ENCODE measurements at regions of chr4 and their contacts with region 1.

Region 1: GRCh38 chr4:88211473-88212252 is 53.2 kb upstream of the ABCG2 start:
- DNase-seq: peak; percentile 53
- CTCF ChIP-seq: peak; percentile 52

Region 2: GRCh38 chr4:87848622-87849351 is 362.9 kb before region 1 on chr4:
- CTCF ChIA-PET with region 1: interaction called, 115 read pairs
- POLR2A ChIA-PET with region 1: no interaction called
- DNase-seq: peak; percentile 26
- CTCF ChIP-seq: peak; percentile 66

Region 3: GRCh38 chr4:88021824-88022223 is 189.8 kb before region 1 on chr4:
- CTCF ChIA-PET with region 1: interaction called, 10 read pairs
- POLR2A ChIA-PET with region 1: no interaction called
- DNase-seq: no peak
- CTCF ChIP-seq: no peak

Region 4: GRCh38 chr4:88033309-88033708 is 178.4 kb before region 1 on chr4:
- CTCF ChIA-PET with region 1: interaction called, 102 read pairs
- POLR2A ChIA-PET with region 1: no interaction called
- DNase-seq: peak; percentile 50
- CTCF ChIP-seq: peak; percentile 70

Region 5: GRCh38 chr4:88196013-88196365 is 15.7 kb before region 1 on chr4:
- CTCF ChIA-PET with region 1: interaction called, 10 read pairs
- POLR2A ChIA-PET with region 1: no interaction called
- DNase-seq: no peak
- CTCF ChIP-seq: no peak

Region 6: GRCh38 chr4:88225232-88226105 is 13.8 kb after region 1 on chr4:
- CTCF ChIA-PET with region 1: interaction called, 10 read pairs
- POLR2A ChIA-PET with region 1: no interaction called
- DNase-seq: no peak
- CTCF ChIP-seq: no peak

Region 7: DNA sequence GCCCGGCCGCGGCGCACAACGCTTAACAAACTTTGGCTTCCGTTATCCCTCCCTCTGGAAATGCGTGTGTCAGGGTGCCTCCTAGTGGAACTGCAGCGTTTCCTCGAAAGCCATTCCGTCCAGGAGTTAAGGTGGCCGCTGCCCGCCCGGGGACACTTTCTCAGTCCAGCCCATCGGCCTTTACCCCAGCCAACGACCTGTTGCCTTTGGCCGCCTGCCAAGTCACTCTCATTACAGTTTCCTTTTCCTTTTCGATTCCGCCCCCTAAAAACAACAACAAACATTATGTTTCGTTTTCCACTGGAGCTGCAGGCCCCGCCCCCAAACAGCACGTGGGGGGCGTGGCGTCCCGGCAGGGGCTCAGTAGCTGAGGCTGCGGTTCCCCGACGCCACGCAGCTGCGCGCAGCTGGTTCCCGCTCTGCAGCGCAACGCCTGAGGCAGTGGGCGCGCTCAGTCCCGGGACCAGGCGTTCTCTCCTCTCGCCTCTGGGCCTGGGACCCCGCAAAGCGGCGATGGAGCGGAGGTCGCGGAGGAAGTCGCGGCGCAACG is 245.2 kb after region 1 on chr4 and contains the start of gene HERC5:
- CTCF ChIA-PET with region 1: no interaction called
- POLR2A ChIA-PET with region 1: no interaction called
- DNase-seq: peak; percentile 98
- CTCF ChIP-seq: peak; percentile 55

Region 8: GRCh38 chr4:88514557-88515511 is 303.2 kb after region 1 on chr4:
- CTCF ChIA-PET with region 1: interaction called, 266 read pairs
- POLR2A ChIA-PET with region 1: no interaction called
- DNase-seq: no peak
- CTCF ChIP-seq: no peak